ENCODE measurements at regions of chr12 and their contacts with region 1.

Region 1: GRCh38 chr12:107992870-107993451 is 136.1 kb upstream of the WSCD2 start:
- DNase-seq: no peak
- ATAC-seq: no peak

Region 2: DNA sequence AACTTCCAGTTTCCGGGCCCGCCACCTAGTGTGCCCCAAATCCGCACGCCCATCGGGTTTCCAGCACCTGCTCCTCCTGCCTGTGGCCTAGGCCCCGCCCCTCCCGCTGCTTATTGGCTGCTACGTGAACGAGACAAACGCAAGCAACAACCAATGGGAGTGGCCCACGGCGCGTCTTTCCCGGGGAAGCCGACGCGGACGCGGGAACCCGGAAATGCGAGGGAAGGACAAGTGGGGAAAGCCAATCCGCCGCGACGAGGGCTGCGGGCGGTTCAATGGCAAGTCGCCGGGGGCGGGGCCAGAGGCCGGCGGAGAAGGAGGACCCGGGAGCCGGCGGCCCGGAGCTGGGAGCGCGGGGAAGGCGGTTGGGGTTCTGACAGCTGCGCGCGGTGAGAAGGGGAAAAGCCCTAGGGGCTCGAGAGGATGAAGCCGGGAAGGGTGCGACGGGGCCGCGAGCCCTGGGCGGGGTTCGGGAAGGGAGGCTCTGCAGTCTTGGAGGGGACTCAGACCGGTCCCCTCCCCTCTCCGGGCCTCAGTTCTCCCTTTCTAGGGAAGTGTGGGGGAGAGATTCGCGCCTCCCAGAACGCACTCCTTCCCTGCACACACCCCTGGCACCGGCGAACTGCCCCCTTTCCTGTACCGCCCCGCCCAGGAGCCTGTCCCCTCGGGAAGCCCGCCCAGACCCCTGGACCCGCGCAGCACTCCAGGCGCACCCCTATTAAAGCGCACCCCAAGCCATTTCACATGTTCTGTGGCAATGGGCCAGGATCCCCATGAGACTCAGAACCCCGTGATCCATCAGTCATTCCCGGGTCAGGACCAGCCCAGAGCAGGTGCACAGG is 522.2 kb after region 1 on chr12 and contains the start of gene FICD:
- intact Hi-C with region 1: loop called (anchors 5 kb)
- DNase-seq: peak; percentile 100
- ATAC-seq: peak; percentile 97
- total RNA-seq, gene FICD: 3.0 TPM